ENCODE measurements at regions of chr7 and their contacts with region 1.

Region 1: DNA sequence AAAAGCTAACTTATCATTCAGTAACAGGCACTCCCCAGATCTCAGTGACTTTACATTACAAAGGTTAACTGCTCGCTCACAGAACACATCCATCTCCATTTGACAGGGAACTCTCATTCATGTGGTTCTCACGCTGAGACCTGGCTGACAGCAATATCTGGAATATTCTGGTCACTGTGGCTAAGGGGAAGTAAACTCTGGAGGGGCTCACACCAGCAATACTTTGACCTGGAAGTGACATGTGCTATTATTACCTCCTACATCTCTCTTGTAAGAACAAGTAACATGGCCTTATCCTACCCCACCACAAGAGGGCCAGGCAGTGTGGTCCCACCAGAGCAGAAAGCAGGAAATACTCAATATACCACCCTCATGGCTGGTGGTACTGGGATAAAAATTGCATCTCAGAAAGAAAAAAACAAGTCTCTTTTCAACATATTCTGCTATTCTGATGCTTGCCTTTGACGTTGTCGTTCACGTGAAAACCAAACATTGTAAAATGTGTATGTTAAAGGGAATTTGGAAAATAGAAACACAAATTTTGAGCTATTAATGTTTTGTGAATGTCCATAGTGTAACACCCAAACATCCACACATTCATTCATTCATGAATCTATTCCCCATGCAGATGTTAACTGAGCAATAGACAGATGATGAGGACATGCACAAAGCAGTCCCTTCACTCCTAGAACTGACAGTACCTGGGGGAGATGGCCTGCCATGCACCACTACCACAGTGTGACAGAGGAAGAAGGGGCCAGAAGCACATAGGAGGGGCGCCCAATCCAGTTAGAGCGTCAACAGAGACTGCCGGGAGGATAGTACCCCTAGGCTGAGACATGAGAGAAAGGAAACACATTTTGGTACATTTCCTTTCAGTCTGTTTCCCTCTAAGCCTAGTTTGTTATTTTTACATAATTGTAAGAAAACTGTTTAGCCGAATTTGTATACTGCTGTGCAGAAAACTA is 166.0 kb upstream of the SP4 start:
- ATAC-seq: peak; percentile 58 to 98 (median 94)
- H3K4me3 ChIP-seq: no peak overlapping the region
- H3K27ac ChIP-seq: no peak overlapping the region
- H3K4me1 ChIP-seq: peaks cover 6 to 14% of the 10 kb centered on the region in 2 donors

Region 2: GRCh38 chr7:20417260-20417659 is 844.7 kb before region 1 on chr7:
- in situ Hi-C with region 1: no loop called
- ATAC-seq: no peak
- H3K4me3 ChIP-seq: no peak overlapping the region
- H3K27ac ChIP-seq: no peak overlapping the region
- H3K4me1 ChIP-seq: no peaks in the 10 kb centered on the region

Region 3: GRCh38 chr7:21497072-21497471 is 235.2 kb after region 1 on chr7:
- in situ Hi-C with region 1: loop called in 3 of 9 experiments (anchors 25 kb)
- ATAC-seq: peak in 1 of 8 experiments; percentile 58
- H3K4me3 ChIP-seq: no peak overlapping the region
- H3K27ac ChIP-seq: no peak overlapping the region
- H3K4me1 ChIP-seq: no peaks in the 10 kb centered on the region

Region 4: GRCh38 chr7:21507626-21508343 is 245.9 kb after region 1 on chr7:
- in situ Hi-C with region 1: loop called in 2 of 9 experiments (anchors 25 kb)
- ATAC-seq: peak in 3 of 8 experiments; percentile 72 to 88 (median 76)
- H3K4me3 ChIP-seq: no peak overlapping the region
- H3K27ac ChIP-seq: no peak overlapping the region
- H3K4me1 ChIP-seq: no peaks in the 10 kb centered on the region

Region 5: GRCh38 chr7:21767300-21767900 is 505.5 kb after region 1 on chr7:
- in situ Hi-C with region 1: loop called in 5 of 9 experiments (anchors 10 to 25 kb)
- ATAC-seq: peak; percentile 72 to 100 (median 82)
- H3K4me3 ChIP-seq: no peak overlapping the region
- H3K27ac ChIP-seq: no peak overlapping the region
- H3K4me1 ChIP-seq: peaks cover 16 to 21% of the 10 kb centered on the region in 2 donors